ENCODE measurements at regions of chr6 and their contacts with region 1.

Region 1: DNA sequence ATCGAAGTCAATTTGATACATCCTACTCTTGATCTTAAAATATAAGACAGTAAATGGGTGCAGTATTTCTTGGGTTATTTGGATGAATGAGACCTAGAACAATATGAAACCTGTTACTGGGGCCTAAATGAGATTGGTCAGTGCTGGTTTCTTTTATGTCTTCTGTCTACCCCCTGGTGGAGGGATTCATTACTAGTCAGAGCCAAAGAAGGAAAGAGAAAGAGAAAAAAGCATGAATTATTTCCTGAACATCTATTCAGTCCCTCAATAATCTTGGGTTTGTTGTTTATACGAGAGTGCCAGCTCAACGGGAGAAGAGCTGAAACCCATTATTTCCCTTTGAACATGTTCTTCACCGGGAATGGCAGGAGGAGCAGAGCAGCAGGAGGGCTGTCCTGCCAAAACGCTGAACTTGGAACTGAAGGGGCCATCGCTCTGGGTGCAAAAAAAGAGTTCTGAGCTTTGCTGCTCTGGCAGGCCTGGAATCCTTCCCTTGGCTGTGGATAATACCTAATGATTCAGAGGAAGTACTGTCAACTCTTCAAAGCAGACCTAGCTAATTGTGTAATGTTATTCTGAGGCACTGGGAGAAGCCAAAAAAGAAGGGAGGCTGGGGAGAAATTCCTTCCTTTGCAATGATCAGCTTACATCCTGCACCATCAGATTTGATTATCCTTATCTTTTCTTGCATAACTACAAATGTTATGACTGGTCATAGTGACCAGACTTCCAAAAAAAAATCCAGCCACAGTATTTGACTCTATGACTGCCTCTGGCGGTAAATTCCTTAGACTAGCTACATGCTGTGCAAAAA is 72.0 kb downstream of the BLOC1S5 start:
- DNase-seq: no peak
- H3K4me3 ChIP-seq: no peak overlapping the region
- H3K27ac ChIP-seq: no peak overlapping the region
- H3K4me1 ChIP-seq: no peaks in the 10 kb centered on the region
- H3K27me3 ChIP-seq: no peaks in the 10 kb centered on the region
- CTCF ChIP-seq: peak; percentile 24

Region 2: GRCh38 chr6:7899101-7899888 is 92.9 kb before region 1 on chr6:
- intact Hi-C with region 1: loop called (anchors 10 kb)
- DNase-seq: peak; percentile 46
- H3K4me3 ChIP-seq: no peak overlapping the region
- H3K27ac ChIP-seq: no peak overlapping the region
- H3K4me1 ChIP-seq: peaks cover 7% of the 10 kb centered on the region
- H3K27me3 ChIP-seq: no peaks in the 10 kb centered on the region
- CTCF ChIP-seq: peak; percentile 16

Region 3: DNA sequence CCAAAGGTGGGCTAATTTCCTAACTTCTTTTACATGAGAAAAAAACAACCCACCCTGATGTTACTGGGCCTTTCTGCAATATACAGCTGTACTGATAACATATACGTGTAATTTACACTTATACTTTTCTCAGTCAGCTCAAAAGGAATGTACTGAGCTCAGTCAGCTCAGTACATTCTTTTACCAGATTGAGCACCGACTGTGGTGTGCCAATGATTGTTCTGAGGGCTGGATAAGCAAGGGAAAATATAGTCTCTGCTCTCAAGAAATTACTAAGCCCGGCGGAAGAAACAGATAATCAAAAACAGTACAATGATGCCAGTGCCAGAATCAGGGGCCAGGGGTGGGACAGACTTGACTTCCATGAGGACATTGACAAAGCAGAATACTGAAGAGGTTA is 82.0 kb after region 1 on chr6:
- intact Hi-C with region 1: no loop called
- DNase-seq: no peak
- H3K4me3 ChIP-seq: no peak overlapping the region
- H3K27ac ChIP-seq: no peak overlapping the region
- H3K4me1 ChIP-seq: no peaks in the 10 kb centered on the region
- H3K27me3 ChIP-seq: no peaks in the 10 kb centered on the region
- CTCF ChIP-seq: no peak